ENCODE measurements at regions of chr17 and their contacts with region 1.

Region 1: GRCh38 chr17:8288336-8289102 is at the start of gene RANGRF:
- DNase-seq: peak; percentile 81 to 87
- ATAC-seq: peak; percentile 94 to 96
- H3K4me3 ChIP-seq: peak within 1 kb of the TSS; percentile 74 to 100 (median 96)
- H3K27ac ChIP-seq: peak within 1 kb of the TSS; percentile 89 to 100 (median 100)
- H3K4me1 ChIP-seq: peaks cover 16 to 24% of the 10 kb centered on the region in 2 donors
- H3K27me3 ChIP-seq: no peaks in the 10 kb centered on the region
- CTCF ChIP-seq: no peak
- POLR2A ChIP-seq: peak; percentile 59 to 68
- total RNA-seq, gene RANGRF: 6.9 to 21.2 (median 15.4) TPM

Region 2: DNA sequence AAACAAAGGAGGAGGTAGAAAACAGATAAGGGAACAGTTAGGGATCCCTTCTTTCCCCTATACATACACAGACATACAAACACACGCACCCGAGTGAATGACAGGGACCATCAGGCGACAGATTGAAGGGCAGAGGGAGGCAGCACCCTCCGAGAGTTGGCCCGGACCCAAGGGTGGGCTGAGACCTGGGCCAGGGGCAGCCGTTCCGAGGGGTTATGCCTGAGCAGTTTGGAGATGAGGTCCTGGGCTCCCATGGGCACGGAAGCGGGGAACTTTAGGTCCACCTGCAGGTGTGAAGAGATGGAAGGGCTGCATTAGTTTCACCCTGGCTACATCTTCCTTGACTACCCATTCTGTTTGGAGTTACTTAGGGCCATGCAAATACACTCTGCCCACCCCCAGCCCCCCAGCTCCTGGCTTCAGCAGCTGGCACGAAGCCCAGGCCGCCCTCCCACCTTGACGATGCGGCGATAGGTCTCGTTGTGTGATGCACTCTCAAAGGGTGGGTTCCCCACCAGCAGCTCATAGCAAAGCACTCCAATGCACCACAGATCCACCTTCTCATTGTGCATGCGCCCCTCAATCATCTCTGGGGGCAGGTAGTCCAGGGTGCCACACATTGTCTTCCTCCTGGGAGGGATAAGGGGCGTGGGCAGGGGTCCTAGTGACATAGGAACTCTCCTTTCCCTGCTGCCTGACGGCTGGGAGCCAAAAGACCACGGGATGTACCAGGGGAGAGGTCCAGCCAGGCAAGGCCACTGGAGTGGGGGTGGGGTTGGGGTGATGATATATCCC is 83.6 kb before region 1 on chr17:
- in situ Hi-C with region 1: no loop called
- intact Hi-C with region 1: loop called (anchors 5 kb)
- DNase-seq: no peak
- ATAC-seq: no peak
- H3K4me3 ChIP-seq: no peak overlapping the region
- H3K27ac ChIP-seq: no peak overlapping the region
- H3K4me1 ChIP-seq: peaks cover 1 to 3% of the 10 kb centered on the region in 2 donors
- H3K27me3 ChIP-seq: no peaks in the 10 kb centered on the region
- CTCF ChIP-seq: no peak
- POLR2A ChIP-seq: no peak

Region 3: GRCh38 chr17:8266648-8267479 is 21.7 kb before region 1 on chr17:
- in situ Hi-C with region 1: no loop called
- intact Hi-C with region 1: no loop called
- DNase-seq: no peak
- ATAC-seq: no peak
- H3K4me3 ChIP-seq: no peak overlapping the region
- H3K27ac ChIP-seq: no peak overlapping the region
- H3K4me1 ChIP-seq: no peaks in the 10 kb centered on the region
- H3K27me3 ChIP-seq: no peaks in the 10 kb centered on the region
- CTCF ChIP-seq: no peak
- POLR2A ChIP-seq: no peak

Region 4: DNA sequence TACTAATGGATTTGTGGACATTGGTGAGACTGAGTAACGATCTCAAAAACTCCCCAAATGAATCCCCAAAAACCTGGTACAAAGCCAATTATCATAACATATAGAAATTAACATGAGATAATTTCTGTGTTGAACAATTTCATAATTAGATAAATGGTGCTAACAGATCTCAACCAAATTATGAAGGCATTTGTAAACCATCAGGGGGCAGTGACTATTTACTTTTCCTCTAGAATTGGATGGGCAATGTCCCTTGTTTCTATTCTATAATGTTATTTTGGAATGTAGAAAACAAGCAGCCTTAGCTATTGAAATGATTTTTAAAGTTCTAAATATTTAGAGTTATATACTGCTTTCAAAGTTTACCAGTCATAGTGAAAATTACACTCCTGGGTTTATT is 284.2 kb after region 1 on chr17:
- in situ Hi-C with region 1: no loop called
- intact Hi-C with region 1: no loop called
- DNase-seq: no peak
- ATAC-seq: no peak
- H3K4me3 ChIP-seq: no peak overlapping the region
- H3K27ac ChIP-seq: no peak overlapping the region
- H3K4me1 ChIP-seq: no peaks in the 10 kb centered on the region
- H3K27me3 ChIP-seq: no peaks in the 10 kb centered on the region
- CTCF ChIP-seq: peak in 1 of 5 experiments; percentile 26
- POLR2A ChIP-seq: no peak

Measured in gastrocnemius medialis (tissue), 4 donors.